ENCODE measurements at regions of chr19 and their contacts with region 1.

Region 1: GRCh38 chr19:17390665-17391370 is 3.2 kb downstream of the CCDC194 start:
- DNase-seq: peak; percentile 91
- ATAC-seq: peak; percentile 100
- H3K4me3 ChIP-seq: peak overlapping the region in 4 of 5 experiments; percentile 41 to 69 (median 58)
- H3K4me3 Mint-ChIP-seq: peak overlapping the region; percentile 91
- H3K27ac ChIP-seq: no peak overlapping the region
- H3K27ac Mint-ChIP-seq: peak overlapping the region; percentile 41
- H3K4me1 ChIP-seq: peaks cover 23 to 29% of the 10 kb centered on the region in 2 donors
- H3K4me1 Mint-ChIP-seq: peaks cover 21% of the 10 kb centered on the region
- H3K27me3 ChIP-seq: peaks cover 0 to 22% (median 9%) of the 10 kb centered on the region in 4 experiments
- H3K27me3 Mint-ChIP-seq: no peaks in the 10 kb centered on the region
- CTCF ChIP-seq: peak; percentile 68

Region 2: GRCh38 chr19:17079710-17080439 is 310.9 kb before region 1 on chr19:
- CTCF ChIA-PET with region 1: no interaction called
- POLR2A ChIA-PET with region 1: no interaction called
- intact Hi-C with region 1: no loop called
- DNase-seq: peak; percentile 76
- ATAC-seq: peak; percentile 20
- H3K4me3 ChIP-seq: peak overlapping the region in 4 of 5 experiments; percentile 1 to 41 (median 24)
- H3K4me3 Mint-ChIP-seq: peak overlapping the region; percentile 69
- H3K27ac ChIP-seq: peak overlapping the region; percentile 47 to 66
- H3K27ac Mint-ChIP-seq: peak overlapping the region; percentile 84
- H3K4me1 ChIP-seq: peaks cover 47 to 71% of the 10 kb centered on the region in 2 donors
- H3K4me1 Mint-ChIP-seq: peaks cover 72% of the 10 kb centered on the region
- H3K27me3 ChIP-seq: no peaks in the 10 kb centered on the region
- H3K27me3 Mint-ChIP-seq: no peaks in the 10 kb centered on the region
- CTCF ChIP-seq: peak; percentile 32

Region 3: GRCh38 chr19:17292286-17293097 is 98.3 kb before region 1 on chr19:
- CTCF ChIA-PET with region 1: interaction called, 25 read pairs
- POLR2A ChIA-PET with region 1: no interaction called
- intact Hi-C with region 1: loop called (anchors 1 kb)
- DNase-seq: peak; percentile 85
- ATAC-seq: peak; percentile 93
- H3K4me3 ChIP-seq: peak overlapping the region; percentile 30 to 75 (median 60)
- H3K4me3 Mint-ChIP-seq: peak overlapping the region; percentile 93
- H3K27ac ChIP-seq: no peak overlapping the region
- H3K27ac Mint-ChIP-seq: peak overlapping the region; percentile 81
- H3K4me1 ChIP-seq: peaks cover 0 to 10% of the 10 kb centered on the region in 2 donors
- H3K4me1 Mint-ChIP-seq: peaks cover 12% of the 10 kb centered on the region
- H3K27me3 ChIP-seq: no peaks in the 10 kb centered on the region
- H3K27me3 Mint-ChIP-seq: no peaks in the 10 kb centered on the region
- CTCF ChIP-seq: peak; percentile 79

Region 4: DNA sequence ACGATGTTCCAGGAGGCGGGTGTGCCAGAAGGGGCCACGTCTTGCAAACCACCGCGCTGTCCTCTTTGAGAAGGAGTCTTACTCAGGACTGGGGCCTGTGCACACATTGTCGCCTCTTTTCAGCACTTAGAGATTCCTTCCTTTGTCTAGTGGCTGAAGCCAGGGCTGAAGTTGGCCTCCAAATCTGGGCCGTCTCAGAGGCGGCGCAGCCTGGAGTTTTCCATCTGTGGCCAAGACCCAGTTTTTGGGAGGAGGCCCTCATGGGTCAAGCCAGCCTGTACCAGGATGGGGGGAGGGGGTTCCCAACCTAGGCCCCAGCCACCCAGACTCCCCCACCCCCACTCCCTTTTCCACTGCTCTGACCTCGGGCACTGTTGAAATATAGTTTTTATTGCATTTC is 68.0 kb before region 1 on chr19:
- CTCF ChIA-PET with region 1: no interaction called
- POLR2A ChIA-PET with region 1: no interaction called
- intact Hi-C with region 1: no loop called
- DNase-seq: no peak
- ATAC-seq: no peak
- H3K4me3 ChIP-seq: no peak overlapping the region
- H3K4me3 Mint-ChIP-seq: no peak overlapping the region
- H3K27ac ChIP-seq: no peak overlapping the region
- H3K27ac Mint-ChIP-seq: no peak overlapping the region
- H3K4me1 ChIP-seq: peaks cover 0 to 3% of the 10 kb centered on the region in 2 donors
- H3K4me1 Mint-ChIP-seq: peaks cover 1% of the 10 kb centered on the region
- H3K27me3 ChIP-seq: no peaks in the 10 kb centered on the region
- H3K27me3 Mint-ChIP-seq: no peaks in the 10 kb centered on the region
- CTCF ChIP-seq: no peak

Region 5: DNA sequence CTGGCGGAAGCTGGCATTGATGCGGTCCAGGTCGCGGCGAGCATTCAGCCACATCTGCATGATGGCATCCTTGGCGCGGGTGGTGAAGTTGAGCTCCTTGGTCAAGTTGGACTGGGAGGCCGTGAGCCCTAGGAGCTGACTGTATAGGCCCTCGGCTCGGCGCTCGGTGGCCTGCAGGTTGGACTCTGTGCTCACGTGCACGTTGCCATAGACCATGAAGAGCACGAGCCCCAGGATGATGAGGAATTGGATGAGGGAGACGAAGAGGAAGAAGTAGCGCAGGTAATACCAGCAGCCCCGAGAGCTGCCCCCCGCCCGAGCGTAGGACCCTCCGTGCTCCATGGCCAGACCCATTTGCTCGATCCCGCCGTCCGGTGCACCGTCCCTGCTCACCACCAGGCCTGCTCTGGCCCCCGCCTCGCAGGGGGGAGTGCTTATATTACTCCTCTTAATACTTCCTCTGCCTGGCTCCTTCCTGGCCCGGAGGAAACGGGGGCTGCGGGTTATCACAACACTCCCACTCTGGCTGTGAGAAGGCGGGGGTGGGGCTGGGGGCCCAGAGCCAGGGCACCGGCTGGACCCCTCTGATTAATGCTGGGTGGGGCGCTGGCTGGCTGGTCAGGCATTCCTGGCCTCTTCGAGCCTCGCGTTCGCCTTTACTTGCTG is 13.8 kb before region 1 on chr19 and contains the start of gene PLVAP:
- CTCF ChIA-PET with region 1: interaction called, 23 read pairs
- POLR2A ChIA-PET with region 1: no interaction called
- intact Hi-C with region 1: no loop called
- DNase-seq: no peak
- ATAC-seq: no peak
- H3K4me3 ChIP-seq: no peak within 1 kb of the TSS
- H3K4me3 Mint-ChIP-seq: no peak within 1 kb of the TSS
- H3K27ac ChIP-seq: no peak within 1 kb of the TSS
- H3K27ac Mint-ChIP-seq: no peak within 1 kb of the TSS
- H3K4me1 ChIP-seq: peaks cover 15 to 27% of the 10 kb centered on the region in 2 donors
- H3K4me1 Mint-ChIP-seq: peaks cover 19% of the 10 kb centered on the region
- H3K27me3 ChIP-seq: peaks cover 0 to 33% (median 5%) of the 10 kb centered on the region in 4 experiments
- H3K27me3 Mint-ChIP-seq: peaks cover 19% of the 10 kb centered on the region
- CTCF ChIP-seq: no peak
- total RNA-seq, gene PLVAP: not detected in 2 replicates

Region 6: DNA sequence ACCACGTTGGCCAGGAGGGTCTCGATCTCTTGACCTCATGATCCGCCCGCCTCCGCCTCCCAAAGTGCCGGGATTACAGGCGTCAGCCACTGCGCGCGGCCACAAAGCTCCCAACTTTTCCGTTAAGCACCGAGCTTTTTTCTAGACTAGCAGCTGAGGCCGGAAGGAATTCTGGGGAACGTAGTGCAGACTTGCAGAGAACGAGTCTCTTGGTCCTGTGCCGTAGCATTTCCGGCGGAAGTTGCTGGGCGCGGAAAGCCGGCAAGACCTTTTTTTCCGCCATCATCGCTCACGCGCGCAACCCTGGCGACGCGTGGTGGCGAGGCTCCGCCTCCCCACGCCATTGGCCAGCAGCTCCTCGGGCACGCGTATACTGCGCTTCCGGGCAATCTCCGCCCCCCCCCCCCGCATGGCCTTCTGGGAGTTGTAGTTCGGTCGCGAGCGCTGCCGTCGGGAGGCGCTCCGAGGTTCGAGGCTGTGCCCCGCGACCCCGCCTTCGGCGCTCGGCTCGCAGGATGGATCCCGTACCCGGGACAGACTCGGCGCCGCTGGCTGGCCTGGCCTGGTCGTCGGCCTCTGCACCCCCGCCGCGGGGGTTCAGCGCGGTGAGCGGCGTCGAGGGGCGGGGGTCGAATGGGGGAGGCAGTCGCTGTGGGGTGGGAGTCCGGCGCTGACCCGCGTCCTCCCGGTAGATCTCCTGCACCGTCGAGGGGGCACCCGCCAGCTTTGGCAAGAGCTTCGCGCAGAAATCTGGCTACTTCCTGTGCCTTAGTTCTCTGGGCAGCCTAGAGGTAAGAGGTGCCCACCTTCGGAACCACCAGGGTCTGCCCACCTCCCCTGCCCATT is 29.0 kb after region 1 on chr19 and contains the start of gene MVB12A:
- CTCF ChIA-PET with region 1: interaction called, 3 read pairs
- POLR2A ChIA-PET with region 1: no interaction called
- intact Hi-C with region 1: loop called (anchors 1 kb)
- DNase-seq: peak; percentile 98
- ATAC-seq: peak; percentile 97
- H3K4me3 ChIP-seq: peak within 1 kb of the TSS; percentile 71 to 89 (median 76)
- H3K4me3 Mint-ChIP-seq: peak within 1 kb of the TSS; percentile 96
- H3K27ac ChIP-seq: peak within 1 kb of the TSS; percentile 33 to 60
- H3K27ac Mint-ChIP-seq: peak within 1 kb of the TSS; percentile 93
- H3K4me1 ChIP-seq: peaks cover 12 to 16% of the 10 kb centered on the region in 2 donors
- H3K4me1 Mint-ChIP-seq: peaks cover 15% of the 10 kb centered on the region
- H3K27me3 ChIP-seq: no peaks in the 10 kb centered on the region
- H3K27me3 Mint-ChIP-seq: no peaks in the 10 kb centered on the region
- CTCF ChIP-seq: no peak
- total RNA-seq, gene MVB12A: 26.8 and 33.6 TPM in 2 replicates